A673 (cell line): ENCODE measurements at regions of chr7 and their contacts with region 1.

Region 1: DNA sequence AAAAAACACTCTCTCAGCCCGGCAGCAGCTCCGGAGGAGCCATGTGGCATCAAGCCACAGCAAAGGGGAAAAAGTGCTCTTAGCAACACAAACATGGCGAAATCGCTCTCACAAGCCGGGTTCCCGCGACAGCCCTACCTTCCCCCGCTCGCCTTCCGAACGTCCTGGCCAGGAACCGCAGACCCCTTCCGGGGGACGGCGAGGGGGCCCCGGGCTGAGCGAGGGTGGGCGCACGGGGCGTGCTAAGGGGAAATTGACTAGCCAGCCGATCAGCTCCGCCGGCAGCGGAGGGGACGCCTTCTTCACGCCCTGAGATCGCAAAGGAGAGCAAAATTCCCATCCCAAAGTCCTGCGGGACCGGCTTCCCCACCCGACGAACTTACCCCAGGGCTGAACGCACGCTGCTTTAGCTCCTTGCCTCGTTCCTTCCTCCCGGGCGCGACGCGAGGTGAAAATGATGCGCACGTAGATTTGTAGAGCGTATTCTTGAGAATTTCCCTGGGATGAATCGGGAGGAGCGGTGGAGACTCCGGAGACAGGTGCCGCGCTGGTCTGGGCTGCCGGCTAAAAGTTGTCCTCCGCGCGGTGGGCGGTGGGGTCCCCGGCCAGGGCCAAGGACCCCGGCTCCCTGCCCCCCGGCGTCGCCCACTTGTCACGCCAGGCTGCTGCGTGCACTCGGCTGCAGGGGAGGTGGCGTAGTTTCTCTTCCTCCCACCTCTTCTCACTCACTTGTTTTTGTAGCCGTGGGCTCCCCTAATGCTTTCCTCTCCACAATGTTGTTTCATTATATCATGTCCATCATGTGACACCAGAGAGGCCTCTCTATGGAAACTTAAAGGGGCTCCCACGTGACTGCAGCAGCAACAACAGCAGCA is 220.1 kb upstream of the MKLN1 start:
- DNase-seq: peak; percentile 87
- H3K4me3 ChIP-seq: peak overlapping the region; percentile 71
- H3K27ac ChIP-seq: peak overlapping the region; percentile 93
- H3K4me1 ChIP-seq: peaks cover 33% of the 10 kb centered on the region
- H3K27me3 ChIP-seq: no peaks in the 10 kb centered on the region
- CTCF ChIP-seq: 0 out of 2 replicates have a peak, but pooled peaks have one; percentile 13

Region 2: DNA sequence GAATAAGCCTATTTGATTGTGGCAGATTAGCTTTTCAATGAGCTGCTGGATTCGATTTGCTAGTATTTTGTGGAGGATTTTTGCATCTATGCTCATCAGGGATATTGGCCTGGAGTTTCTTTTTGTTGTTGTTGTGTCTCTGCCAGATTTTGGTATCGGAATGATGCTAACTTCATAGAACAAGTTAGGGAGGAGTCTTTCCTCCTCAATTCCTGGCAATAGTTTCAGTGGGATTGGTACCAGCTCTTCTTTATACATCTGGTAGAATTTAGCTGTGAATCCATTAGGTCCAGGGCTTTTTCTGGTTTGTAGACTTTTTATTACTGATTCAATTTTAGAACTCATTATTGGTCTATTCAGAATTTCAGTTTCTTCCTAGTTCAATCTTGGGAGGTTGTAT is 330.1 kb before region 1 on chr7:
- CTCF ChIA-PET with region 1: no interaction called
- POLR2A ChIA-PET with region 1: no interaction called
- intact Hi-C with region 1: no loop called
- DNase-seq: no peak
- H3K4me3 ChIP-seq: no peak overlapping the region
- H3K27ac ChIP-seq: no peak overlapping the region
- H3K4me1 ChIP-seq: no peaks in the 10 kb centered on the region
- H3K27me3 ChIP-seq: peaks cover 6% of the 10 kb centered on the region
- CTCF ChIP-seq: no peak

Region 3: GRCh38 chr7:131021460-131021859 is 86.1 kb before region 1 on chr7:
- CTCF ChIA-PET with region 1: no interaction called
- POLR2A ChIA-PET with region 1: no interaction called
- intact Hi-C with region 1: no loop called
- DNase-seq: peak; percentile 72
- H3K4me3 ChIP-seq: no peak overlapping the region
- H3K27ac ChIP-seq: peak overlapping the region; percentile 72
- H3K4me1 ChIP-seq: peaks cover 41% of the 10 kb centered on the region
- H3K27me3 ChIP-seq: no peaks in the 10 kb centered on the region
- CTCF ChIP-seq: no peak

Region 4: DNA sequence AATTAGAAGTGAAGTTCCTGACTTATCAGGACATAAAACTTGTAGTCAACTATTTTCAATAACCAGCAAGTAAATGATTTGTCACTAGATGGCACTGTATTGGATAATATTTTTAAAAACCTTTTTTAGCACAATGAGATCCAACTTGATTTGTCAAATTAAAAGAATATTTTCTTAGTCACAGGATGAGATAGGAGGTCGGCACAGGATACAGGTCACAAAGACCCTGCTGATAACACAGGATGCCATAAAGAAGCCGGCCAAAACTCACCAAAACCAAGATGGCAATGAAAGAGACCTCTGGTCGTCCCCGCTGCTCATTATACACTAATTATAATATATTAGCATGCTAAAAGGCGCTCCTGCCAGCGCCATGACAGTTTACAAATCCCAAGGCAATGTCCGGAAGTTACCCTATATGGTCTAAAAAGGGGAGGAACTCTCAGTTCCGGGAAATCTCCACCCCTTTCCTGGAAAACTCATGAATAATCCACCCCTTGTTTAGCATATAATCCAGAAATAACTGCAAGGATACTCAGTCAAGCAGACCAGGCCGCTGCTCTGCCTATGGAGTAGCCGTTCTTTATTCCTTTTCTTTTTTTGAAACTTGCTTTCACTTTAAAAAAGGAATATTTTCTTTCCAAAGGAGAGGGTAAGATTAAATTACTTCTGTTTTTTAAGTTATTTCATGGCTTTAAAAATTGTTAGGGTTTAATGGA is 35.6 kb before region 1 on chr7:
- CTCF ChIA-PET with region 1: interaction called, 8 read pairs
- POLR2A ChIA-PET with region 1: interaction called, 5 read pairs
- intact Hi-C with region 1: loop called (anchors 5 kb)
- DNase-seq: peak; percentile 97
- H3K4me3 ChIP-seq: peak overlapping the region; percentile 35
- H3K27ac ChIP-seq: peak overlapping the region; percentile 78
- H3K4me1 ChIP-seq: peaks cover 52% of the 10 kb centered on the region
- H3K27me3 ChIP-seq: no peaks in the 10 kb centered on the region
- CTCF ChIP-seq: peak; percentile 72

Region 5: DNA sequence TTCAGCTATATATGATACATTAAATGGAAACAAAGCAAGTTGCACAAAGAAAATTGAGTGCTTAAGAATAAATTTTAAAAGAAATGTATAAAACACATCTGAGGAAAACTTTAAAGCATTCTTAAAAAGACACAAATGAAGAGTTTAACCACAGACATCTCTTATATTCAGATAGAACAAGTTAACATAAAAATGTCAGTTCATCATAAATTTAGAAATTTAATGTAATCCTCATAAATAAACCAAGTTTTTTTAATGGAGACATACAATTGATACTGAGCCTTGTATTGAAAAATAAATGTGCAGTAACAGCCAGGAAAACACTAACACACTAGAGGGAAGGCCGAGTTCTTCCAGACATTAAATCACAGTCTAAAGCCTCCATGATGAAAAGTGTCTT is 23.8 kb before region 1 on chr7:
- CTCF ChIA-PET with region 1: no interaction called
- POLR2A ChIA-PET with region 1: no interaction called
- intact Hi-C with region 1: no loop called
- DNase-seq: no peak
- H3K4me3 ChIP-seq: no peak overlapping the region
- H3K27ac ChIP-seq: no peak overlapping the region
- H3K4me1 ChIP-seq: peaks cover 26% of the 10 kb centered on the region
- H3K27me3 ChIP-seq: no peaks in the 10 kb centered on the region
- CTCF ChIP-seq: no peak

Region 6: GRCh38 chr7:131327626-131328376 is 220.2 kb after region 1 on chr7 and contains the start of gene MKLN1:
- CTCF ChIA-PET with region 1: no interaction called
- POLR2A ChIA-PET with region 1: no interaction called
- intact Hi-C with region 1: loop called (anchors 5 kb)
- DNase-seq: peak; percentile 94
- H3K4me3 ChIP-seq: peak within 1 kb of the TSS; percentile 75
- H3K27ac ChIP-seq: peak within 1 kb of the TSS; percentile 99
- H3K4me1 ChIP-seq: peaks cover 17% of the 10 kb centered on the region
- H3K27me3 ChIP-seq: no peaks in the 10 kb centered on the region
- CTCF ChIP-seq: no peak
- total RNA-seq, gene MKLN1: 83.5 and 90.2 TPM in 2 replicates

Region 7: DNA sequence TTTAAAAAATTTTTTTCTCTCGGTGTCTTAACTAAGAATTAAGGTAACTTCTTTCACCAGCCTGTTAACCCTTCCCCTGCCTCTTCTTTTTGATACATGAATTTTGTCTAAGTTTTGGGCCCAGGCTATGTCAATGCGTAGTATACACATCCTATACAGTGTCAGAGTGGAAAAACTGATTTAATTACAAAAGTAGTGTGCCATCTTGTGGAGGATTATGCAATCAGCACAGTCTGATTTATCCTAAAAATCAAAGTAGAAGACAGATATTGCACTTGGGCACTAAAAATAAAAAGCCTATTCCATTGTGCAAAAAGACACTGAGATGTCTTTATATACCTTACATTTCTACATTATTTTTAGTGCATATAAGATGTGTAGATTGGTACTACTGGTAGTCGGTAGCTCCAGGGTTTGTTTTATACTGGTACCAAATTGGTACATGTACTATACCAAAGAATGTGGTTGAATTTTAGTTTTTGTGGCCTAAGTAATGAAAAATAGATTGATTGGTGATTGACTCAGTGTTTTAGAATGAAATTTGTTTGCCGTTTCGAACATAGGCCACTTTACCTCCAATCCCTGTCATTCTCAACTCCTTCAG is 316.7 kb after region 1 on chr7:
- CTCF ChIA-PET with region 1: no interaction called
- POLR2A ChIA-PET with region 1: no interaction called
- intact Hi-C with region 1: loop called (anchors 2 kb)
- DNase-seq: peak; percentile 75
- H3K4me3 ChIP-seq: no peak overlapping the region
- H3K27ac ChIP-seq: no peak overlapping the region
- H3K4me1 ChIP-seq: no peaks in the 10 kb centered on the region
- H3K27me3 ChIP-seq: no peaks in the 10 kb centered on the region
- CTCF ChIP-seq: peak; percentile 72